ENCODE measurements at regions of chr16 and their contacts with region 1.

Region 1: GRCh38 chr16:19067349-19068236 is at the start of gene COQ7:
- DNase-seq: peak; percentile 99
- ATAC-seq: peak; percentile 99
- total RNA-seq, gene COQ7: 39.4 TPM

Region 2: GRCh38 chr16:18979936-18980335 is 87.7 kb before region 1 on chr16:
- intact Hi-C with region 1: loop called (anchors 10 kb)
- DNase-seq: no peak
- ATAC-seq: no peak

Region 3: DNA sequence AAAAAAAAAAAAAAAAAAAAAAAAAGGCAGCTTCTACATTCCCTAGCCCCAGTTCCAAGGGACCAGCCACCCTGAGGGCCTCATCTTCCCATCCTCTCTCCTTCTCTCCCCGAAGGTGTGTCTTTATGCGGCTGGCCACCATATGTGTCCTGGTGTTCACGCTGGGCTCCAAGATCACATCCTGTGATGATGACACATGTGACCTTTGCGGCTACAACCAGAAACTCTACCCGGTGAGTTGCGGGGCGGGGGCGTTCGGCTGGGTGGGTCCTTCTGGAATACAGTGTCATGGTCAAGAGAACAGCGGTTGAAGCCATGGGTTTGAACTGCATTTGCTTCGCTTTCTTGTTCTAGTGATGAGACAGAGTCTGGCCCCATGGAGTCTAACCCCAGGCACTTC is 22.8 kb before region 1 on chr16:
- intact Hi-C with region 1: no loop called
- DNase-seq: no peak
- ATAC-seq: no peak

Measured in Right ventricle myocardium superior (tissue), 1 donor.